CD4-positive, alpha-beta T cell (primary cell): ENCODE measurements at regions of chr7 and their contacts with region 1.

Region 1: DNA sequence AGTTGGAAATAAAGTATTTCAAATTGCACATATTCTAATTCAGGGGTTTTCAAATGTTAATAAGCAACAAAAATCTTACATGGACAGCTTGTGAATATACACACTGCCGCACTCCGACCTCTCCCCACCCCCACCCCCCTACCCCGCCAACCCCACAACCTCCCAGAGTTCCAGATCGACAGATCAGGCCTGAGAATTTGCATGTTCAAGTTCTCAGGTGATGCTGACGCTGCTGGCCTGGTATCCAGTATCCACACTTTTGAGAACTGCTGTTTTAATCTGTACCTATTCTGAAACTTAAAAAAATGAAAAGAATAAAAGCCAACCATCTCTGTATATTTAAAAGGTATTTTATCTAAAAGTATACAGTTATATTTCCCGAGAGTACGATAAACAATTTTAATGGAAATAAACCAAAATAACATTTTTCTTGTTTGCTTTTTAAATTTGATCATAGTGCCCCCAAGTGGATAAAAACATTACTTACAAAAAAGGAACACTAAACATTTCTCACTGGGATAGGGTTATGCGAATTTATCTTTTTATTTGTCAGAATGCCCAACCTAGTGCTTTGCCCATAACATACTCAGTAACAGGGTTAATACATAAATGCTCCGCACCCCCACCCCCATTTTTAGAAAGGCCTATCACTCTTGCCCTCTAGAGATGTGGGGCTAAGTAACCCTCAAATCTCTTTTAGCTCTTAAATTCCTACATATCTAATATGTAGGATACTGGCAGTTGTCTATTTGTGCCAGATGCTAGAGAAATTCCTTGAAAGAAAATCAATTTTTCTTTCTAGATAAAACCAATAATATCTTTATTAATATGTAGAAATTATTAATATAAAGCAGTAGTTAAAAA is 166.3 kb downstream of the RNF133 start:
- DNase-seq: no peak
- ATAC-seq: no peak
- H3K4me3 ChIP-seq: no peak overlapping the region
- H3K4me3 Mint-ChIP-seq: no peak overlapping the region
- H3K27ac ChIP-seq: no peak overlapping the region
- H3K27ac Mint-ChIP-seq: no peak overlapping the region
- H3K4me1 ChIP-seq: no peaks in the 10 kb centered on the region
- H3K4me1 Mint-ChIP-seq: no peaks in the 10 kb centered on the region
- H3K27me3 ChIP-seq: no peaks in the 10 kb centered on the region
- H3K27me3 Mint-ChIP-seq: no peaks in the 10 kb centered on the region
- CTCF ChIP-seq: no peak

Region 2: GRCh38 chr7:122595885-122596284 is 63.2 kb after region 1 on chr7:
- CTCF ChIA-PET with region 1: no interaction called
- POLR2A ChIA-PET with region 1: no interaction called
- intact Hi-C with region 1: loop called in 1 of 2 experiments (anchors 10 kb)
- DNase-seq: no peak
- ATAC-seq: no peak
- H3K4me3 ChIP-seq: no peak overlapping the region
- H3K4me3 Mint-ChIP-seq: no peak overlapping the region
- H3K27ac ChIP-seq: no peak overlapping the region
- H3K27ac Mint-ChIP-seq: no peak overlapping the region
- H3K4me1 ChIP-seq: no peaks in the 10 kb centered on the region
- H3K4me1 Mint-ChIP-seq: no peaks in the 10 kb centered on the region
- H3K27me3 ChIP-seq: no peaks in the 10 kb centered on the region
- H3K27me3 Mint-ChIP-seq: no peaks in the 10 kb centered on the region
- CTCF ChIP-seq: no peak

Region 3: GRCh38 chr7:123440101-123440548 is 907.5 kb after region 1 on chr7:
- CTCF ChIA-PET with region 1: no interaction called
- POLR2A ChIA-PET with region 1: no interaction called
- intact Hi-C with region 1: no loop called
- DNase-seq: no peak
- ATAC-seq: no peak
- H3K4me3 ChIP-seq: no peak overlapping the region
- H3K4me3 Mint-ChIP-seq: no peak overlapping the region
- H3K27ac ChIP-seq: no peak overlapping the region
- H3K27ac Mint-ChIP-seq: no peak overlapping the region
- H3K4me1 ChIP-seq: no peaks in the 10 kb centered on the region
- H3K4me1 Mint-ChIP-seq: no peaks in the 10 kb centered on the region
- H3K27me3 ChIP-seq: no peaks in the 10 kb centered on the region
- H3K27me3 Mint-ChIP-seq: no peaks in the 10 kb centered on the region
- CTCF ChIP-seq: no peak